CD4-positive, alpha-beta memory T cell (primary cell): ENCODE measurements at regions of chr3 and their contacts with region 1.

Region 1: DNA sequence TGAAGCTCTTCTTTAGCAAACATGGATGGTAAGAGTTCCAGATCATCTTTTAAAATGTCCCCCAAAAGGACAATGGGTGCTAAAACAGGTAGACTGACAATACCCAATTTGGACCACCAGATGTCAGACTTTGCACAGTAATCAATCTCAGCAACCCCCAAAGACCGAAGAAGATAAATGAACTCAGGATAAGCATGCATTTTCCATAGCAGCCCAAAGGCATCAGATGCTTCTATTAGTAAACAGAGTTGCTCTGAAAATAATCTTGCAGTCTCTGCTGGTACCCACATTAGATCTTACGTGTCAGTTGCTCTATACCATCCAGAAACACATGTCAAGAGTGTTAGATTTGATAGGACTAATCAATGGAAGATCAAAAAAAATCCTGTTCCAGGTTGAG is 20.6 kb downstream of the MYH15 start:
- DNase-seq: peak; percentile 56 to 64 (median 60)
- H3K4me3 ChIP-seq: no peak overlapping the region
- H3K4me3 Mint-ChIP-seq: no peak overlapping the region
- H3K27ac ChIP-seq: no peak overlapping the region
- H3K27ac Mint-ChIP-seq: no peak overlapping the region
- H3K4me1 ChIP-seq: no peaks in the 10 kb centered on the region
- H3K4me1 Mint-ChIP-seq: peaks cover 0 to 4% (median 2%) of the 10 kb centered on the region in 4 donors
- H3K27me3 ChIP-seq: no peaks in the 10 kb centered on the region
- H3K27me3 Mint-ChIP-seq: peaks cover 0 to 2% of the 10 kb centered on the region in 2 donors

Region 2: GRCh38 chr3:108472001-108472591 is 17.7 kb before region 1 on chr3:
- CTCF ChIA-PET with region 1: interaction called, 50 read pairs
- POLR2A ChIA-PET with region 1: no interaction called
- intact Hi-C with region 1: no loop called
- DNase-seq: no peak
- H3K4me3 ChIP-seq: no peak overlapping the region
- H3K4me3 Mint-ChIP-seq: no peak overlapping the region
- H3K27ac ChIP-seq: no peak overlapping the region
- H3K27ac Mint-ChIP-seq: no peak overlapping the region
- H3K4me1 ChIP-seq: no peaks in the 10 kb centered on the region
- H3K4me1 Mint-ChIP-seq: no peaks in the 10 kb centered on the region
- H3K27me3 ChIP-seq: no peaks in the 10 kb centered on the region
- H3K27me3 Mint-ChIP-seq: peaks cover 0 to 5% of the 10 kb centered on the region in 2 donors

Region 3: GRCh38 chr3:108477511-108478147 is 12.1 kb before region 1 on chr3:
- CTCF ChIA-PET with region 1: interaction called, 50 read pairs
- POLR2A ChIA-PET with region 1: no interaction called
- intact Hi-C with region 1: no loop called
- DNase-seq: peak; percentile 45 to 57 (median 53)
- H3K4me3 ChIP-seq: no peak overlapping the region
- H3K4me3 Mint-ChIP-seq: no peak overlapping the region
- H3K27ac ChIP-seq: no peak overlapping the region
- H3K27ac Mint-ChIP-seq: no peak overlapping the region
- H3K4me1 ChIP-seq: no peaks in the 10 kb centered on the region
- H3K4me1 Mint-ChIP-seq: peaks cover 0 to 3% (median 2%) of the 10 kb centered on the region in 4 donors
- H3K27me3 ChIP-seq: no peaks in the 10 kb centered on the region
- H3K27me3 Mint-ChIP-seq: peaks cover 3 to 4% of the 10 kb centered on the region in 2 donors

Region 4: GRCh38 chr3:108507902-108508301 is 18.1 kb after region 1 on chr3:
- CTCF ChIA-PET with region 1: interaction called, 10 read pairs
- POLR2A ChIA-PET with region 1: no interaction called
- intact Hi-C with region 1: no loop called
- DNase-seq: no peak
- H3K4me3 ChIP-seq: no peak overlapping the region
- H3K4me3 Mint-ChIP-seq: no peak overlapping the region
- H3K27ac ChIP-seq: no peak overlapping the region
- H3K27ac Mint-ChIP-seq: no peak overlapping the region
- H3K4me1 ChIP-seq: no peaks in the 10 kb centered on the region
- H3K4me1 Mint-ChIP-seq: no peaks in the 10 kb centered on the region
- H3K27me3 ChIP-seq: no peaks in the 10 kb centered on the region
- H3K27me3 Mint-ChIP-seq: no peaks in the 10 kb centered on the region

Region 5: GRCh38 chr3:108518895-108519294 is 29.1 kb after region 1 on chr3:
- CTCF ChIA-PET with region 1: no interaction called
- POLR2A ChIA-PET with region 1: no interaction called
- intact Hi-C with region 1: no loop called
- DNase-seq: no peak
- H3K4me3 ChIP-seq: no peak overlapping the region
- H3K4me3 Mint-ChIP-seq: no peak overlapping the region
- H3K27ac ChIP-seq: no peak overlapping the region
- H3K27ac Mint-ChIP-seq: no peak overlapping the region
- H3K4me1 ChIP-seq: no peaks in the 10 kb centered on the region
- H3K4me1 Mint-ChIP-seq: no peaks in the 10 kb centered on the region
- H3K27me3 ChIP-seq: no peaks in the 10 kb centered on the region
- H3K27me3 Mint-ChIP-seq: peaks cover 4 to 7% of the 10 kb centered on the region in 2 donors

Region 6: GRCh38 chr3:108552267-108553159 is 62.7 kb after region 1 on chr3:
- CTCF ChIA-PET with region 1: interaction called, 115 read pairs
- POLR2A ChIA-PET with region 1: no interaction called
- intact Hi-C with region 1: loop called (anchors 1 kb)
- DNase-seq: peak in 4 of 5 donors; percentile 38 to 50 (median 39)
- H3K4me3 ChIP-seq: no peak overlapping the region
- H3K4me3 Mint-ChIP-seq: peak overlapping the region in 1 of 8 donors; percentile 14
- H3K27ac ChIP-seq: no peak overlapping the region
- H3K27ac Mint-ChIP-seq: peak overlapping the region in 2 of 7 donors; percentile 6 to 38
- H3K4me1 ChIP-seq: no peaks in the 10 kb centered on the region
- H3K4me1 Mint-ChIP-seq: peaks cover 4 to 7% (median 7%) of the 10 kb centered on the region in 4 donors
- H3K27me3 ChIP-seq: no peaks in the 10 kb centered on the region
- H3K27me3 Mint-ChIP-seq: no peaks in the 10 kb centered on the region

Region 7: GRCh38 chr3:108662130-108662738 is 172.5 kb after region 1 on chr3:
- CTCF ChIA-PET with region 1: interaction called, 4 read pairs
- POLR2A ChIA-PET with region 1: no interaction called
- intact Hi-C with region 1: loop called (anchors 1 kb)
- DNase-seq: peak; percentile 47 to 77 (median 70)
- H3K4me3 ChIP-seq: no peak overlapping the region
- H3K4me3 Mint-ChIP-seq: peak overlapping the region in 1 of 8 donors; percentile 9
- H3K27ac ChIP-seq: no peak overlapping the region
- H3K27ac Mint-ChIP-seq: no peak overlapping the region
- H3K4me1 ChIP-seq: peaks cover 4% of the 10 kb centered on the region
- H3K4me1 Mint-ChIP-seq: peaks cover 7 to 16% (median 12%) of the 10 kb centered on the region in 4 donors
- H3K27me3 ChIP-seq: no peaks in the 10 kb centered on the region
- H3K27me3 Mint-ChIP-seq: no peaks in the 10 kb centered on the region

Region 8: GRCh38 chr3:109081746-109082510 is 592.2 kb after region 1 on chr3:
- CTCF ChIA-PET with region 1: interaction called, 4 read pairs
- POLR2A ChIA-PET with region 1: no interaction called
- intact Hi-C with region 1: loop called (anchors 1 kb)
- DNase-seq: peak in 4 of 5 donors; percentile 2 to 30 (median 17)
- H3K4me3 ChIP-seq: no peak overlapping the region
- H3K4me3 Mint-ChIP-seq: peak overlapping the region in 1 of 8 donors; percentile 23
- H3K27ac ChIP-seq: no peak overlapping the region
- H3K27ac Mint-ChIP-seq: no peak overlapping the region
- H3K4me1 ChIP-seq: no peaks in the 10 kb centered on the region
- H3K4me1 Mint-ChIP-seq: no peaks in the 10 kb centered on the region
- H3K27me3 ChIP-seq: peaks cover 5% of the 10 kb centered on the region
- H3K27me3 Mint-ChIP-seq: peaks cover 10 to 17% of the 10 kb centered on the region in 2 donors